Panc1 (cell line): ENCODE measurements at regions of chr2 and their contacts with region 1.

Region 1: DNA sequence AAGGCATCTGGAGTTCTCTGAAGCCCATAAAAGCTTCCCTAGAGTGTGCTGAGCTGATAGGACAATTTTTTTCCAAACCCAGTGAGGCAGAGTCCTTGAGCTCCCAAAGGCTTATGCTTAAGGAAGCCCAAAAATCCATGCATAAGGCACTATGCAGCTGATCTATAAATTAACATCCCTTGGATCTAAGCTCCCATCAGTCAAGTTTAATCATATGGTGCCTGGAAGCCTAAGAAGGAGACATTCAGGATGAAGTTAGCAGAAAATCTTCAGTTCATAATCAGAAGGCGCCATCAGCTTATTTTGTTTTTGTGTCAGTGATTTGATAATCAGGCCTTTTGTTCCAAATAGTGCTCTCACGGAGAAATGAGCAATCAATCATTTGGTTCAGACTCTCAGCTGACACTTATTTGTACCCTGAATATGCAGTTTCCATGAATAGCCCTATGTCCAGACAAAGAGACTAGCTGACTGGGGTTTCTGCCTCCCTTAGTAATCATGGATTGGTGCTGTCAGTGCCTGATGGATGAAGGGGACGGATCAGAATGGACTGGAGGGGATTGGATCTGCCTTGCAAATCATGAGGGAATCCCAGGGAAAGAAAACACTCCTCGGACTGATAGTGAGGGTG is 464.8 kb upstream of the RGPD4 start:
- DNase-seq: no peak
- ATAC-seq: no peak
- H3K4me3 ChIP-seq: no peak overlapping the region
- H3K27ac ChIP-seq: no peak overlapping the region
- H3K4me1 ChIP-seq: no peaks in the 10 kb centered on the region
- H3K27me3 ChIP-seq: no peaks in the 10 kb centered on the region
- CTCF ChIP-seq: no peak

Region 2: DNA sequence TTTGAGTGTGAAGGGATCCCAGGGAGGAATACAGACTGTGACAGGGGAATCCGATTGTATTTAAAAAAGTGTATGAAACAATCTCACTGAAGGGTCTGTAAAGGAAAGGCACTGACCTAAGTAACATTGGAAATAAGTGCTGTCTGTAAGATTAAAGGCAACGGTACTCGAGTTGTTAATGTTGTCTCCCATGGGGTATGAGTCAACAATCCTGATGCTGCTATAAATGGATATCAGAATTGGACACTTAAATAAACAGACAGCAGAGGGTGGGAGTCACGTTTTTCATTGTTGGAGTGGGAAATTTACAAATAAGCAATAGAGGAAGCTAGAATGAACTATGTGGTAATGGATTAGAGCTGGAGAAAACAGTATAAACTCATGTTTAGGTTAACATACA is 12.4 kb after region 1 on chr2:
- CTCF ChIA-PET with region 1: interaction called, 16 read pairs
- POLR2A ChIA-PET with region 1: no interaction called
- in situ Hi-C with region 1: no loop called
- intact Hi-C with region 1: no loop called
- DNase-seq: no peak
- ATAC-seq: no peak
- H3K4me3 ChIP-seq: no peak overlapping the region
- H3K27ac ChIP-seq: no peak overlapping the region
- H3K4me1 ChIP-seq: no peaks in the 10 kb centered on the region
- H3K27me3 ChIP-seq: no peaks in the 10 kb centered on the region
- CTCF ChIP-seq: no peak

Region 3: DNA sequence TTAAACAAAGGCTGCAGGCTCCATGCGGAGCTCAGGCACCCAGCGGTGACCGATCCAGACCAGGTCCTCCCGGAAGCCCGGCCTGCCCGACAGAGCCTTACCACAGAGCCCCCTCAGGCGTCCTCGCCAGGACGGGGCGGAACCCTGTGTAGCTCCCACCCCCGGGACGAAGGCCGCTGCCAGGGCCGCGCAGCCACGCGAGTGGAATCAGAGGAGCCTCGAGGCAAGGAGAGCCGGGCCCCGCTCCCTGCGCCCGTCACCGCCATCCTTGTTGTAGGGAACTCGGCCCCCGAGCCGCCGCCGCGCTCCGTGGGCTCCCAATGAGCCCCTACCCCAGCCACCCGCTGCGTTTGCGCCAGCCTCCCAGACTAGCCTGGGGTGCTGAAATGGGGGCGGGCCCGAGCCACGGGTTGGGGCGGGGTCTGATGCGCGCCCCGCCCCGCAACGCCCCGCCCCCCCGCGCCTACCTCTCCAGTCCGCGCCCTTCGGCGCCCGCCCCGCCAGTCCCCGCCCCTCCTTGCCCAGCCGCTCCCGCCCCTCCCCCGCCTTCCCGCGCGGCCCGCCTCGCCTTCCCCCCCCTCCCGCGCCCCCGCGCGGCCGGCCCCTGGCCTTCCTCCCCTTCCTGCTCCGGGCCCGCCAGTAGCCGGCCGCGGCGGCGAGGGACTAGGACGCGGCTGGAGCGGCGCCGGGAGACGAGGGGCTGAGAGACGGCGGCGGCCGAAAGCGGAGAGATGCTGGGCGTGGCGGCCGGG is 1172.1 kb after region 1 on chr2 and contains the start of gene LIMS1:
- CTCF ChIA-PET with region 1: no interaction called
- POLR2A ChIA-PET with region 1: no interaction called
- in situ Hi-C with region 1: no loop called
- intact Hi-C with region 1: no loop called
- DNase-seq: no peak
- ATAC-seq: peak; percentile 98
- H3K4me3 ChIP-seq: peak within 1 kb of the TSS; percentile 73 to 76
- H3K27ac ChIP-seq: peak within 1 kb of the TSS; percentile 93
- H3K4me1 ChIP-seq: peaks cover 45% of the 10 kb centered on the region
- H3K27me3 ChIP-seq: no peaks in the 10 kb centered on the region
- CTCF ChIP-seq: peak; percentile 36
- total RNA-seq, gene LIMS1: 101 TPM